ENCODE measurements at regions of chr2 and their contacts with region 1.

Region 1: DNA sequence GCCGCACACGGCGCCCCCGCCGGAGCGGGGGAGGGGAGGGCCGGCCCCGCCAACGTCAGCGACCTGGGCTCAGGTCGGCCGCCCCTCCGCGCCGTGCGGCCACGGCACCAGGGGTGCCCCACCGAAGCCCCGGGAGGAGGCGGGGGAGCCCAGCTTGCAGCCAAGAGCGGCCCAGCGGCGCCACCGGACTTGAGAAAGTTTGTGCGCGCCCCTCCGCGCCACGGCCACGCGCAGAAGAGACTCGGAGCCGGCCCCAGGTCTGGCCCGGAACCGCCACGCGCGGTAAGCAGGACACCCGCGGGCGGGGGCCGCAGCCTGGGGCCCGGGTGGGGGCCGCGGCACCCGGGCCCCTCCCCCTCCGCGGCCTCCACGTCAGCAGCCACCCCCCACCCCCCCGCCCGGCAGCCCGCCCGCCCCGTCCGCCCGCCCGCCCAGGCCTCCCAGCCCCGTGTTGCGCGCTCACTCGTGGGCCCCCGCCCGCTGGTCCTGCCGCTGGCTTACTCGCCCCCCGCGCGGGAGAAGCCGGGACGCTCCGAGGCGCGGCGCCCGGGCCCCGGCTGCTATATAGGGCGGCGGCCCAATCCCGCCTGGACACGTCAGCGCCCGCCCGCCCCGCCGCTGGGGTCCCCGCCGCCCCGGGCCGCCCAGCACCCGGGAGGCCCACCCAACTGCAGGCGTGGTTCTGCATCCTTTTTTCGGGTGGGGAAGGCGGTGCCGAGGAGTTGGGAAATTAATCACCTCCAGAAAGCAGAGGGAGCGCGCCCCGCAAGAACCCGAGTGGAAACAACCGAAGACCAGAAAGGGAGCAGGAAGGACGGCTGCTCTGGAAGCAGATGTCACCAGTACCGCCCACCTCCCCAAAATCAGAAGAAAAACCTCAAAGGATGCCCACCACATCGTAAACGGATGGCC is 42.9 kb downstream of the HDLBP start:
- DNase-seq: peak; percentile 51 to 93
- H3K4me3 ChIP-seq: peak overlapping the region; percentile 97
- CTCF ChIP-seq: no peak
- POLR2A ChIP-seq: no peak

Region 2: DNA sequence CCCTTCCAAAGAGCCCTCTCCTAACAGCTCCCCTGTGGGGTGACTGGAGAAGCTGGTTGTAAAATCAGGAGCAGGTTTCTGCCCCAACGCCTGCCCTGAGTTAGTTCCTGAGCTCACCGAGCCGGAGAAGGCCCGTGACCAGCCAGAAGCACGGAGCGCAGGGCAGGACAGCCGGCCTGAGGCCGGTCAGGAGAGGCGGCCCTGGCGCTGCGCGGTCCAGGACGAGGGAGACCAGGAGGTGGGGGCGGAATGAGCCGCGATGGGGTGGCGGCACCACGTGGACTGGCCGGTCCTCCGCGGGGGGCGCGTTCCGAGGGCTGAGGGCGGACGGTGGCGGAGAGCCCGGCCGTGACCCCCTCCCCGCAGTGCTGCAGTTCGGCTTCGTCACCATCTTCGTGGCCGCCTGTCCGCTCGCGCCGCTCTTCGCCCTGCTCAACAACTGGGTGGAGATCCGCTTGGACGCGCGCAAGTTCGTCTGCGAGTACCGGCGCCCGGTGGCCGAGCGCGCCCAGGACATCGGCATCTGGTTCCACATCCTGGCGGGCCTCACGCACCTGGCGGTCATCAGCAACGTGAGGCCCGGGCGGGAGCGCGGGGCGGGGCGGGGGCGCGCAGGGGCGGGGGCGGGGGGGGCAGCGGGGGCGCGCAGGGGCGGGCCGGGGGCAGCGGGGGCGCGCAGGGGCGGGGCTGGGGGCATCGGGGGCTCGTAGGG is 55.1 kb before region 1 on chr2:
- intact Hi-C with region 1: no loop called
- DNase-seq: peak; percentile 43 to 91
- H3K4me3 ChIP-seq: no peak overlapping the region
- CTCF ChIP-seq: no peak
- POLR2A ChIP-seq: no peak

Region 3: GRCh38 chr2:241315093-241315878 is 42.7 kb after region 1 on chr2 and contains the start of gene HDLBP:
- intact Hi-C with region 1: loop called (anchors 1 kb)
- DNase-seq: peak; percentile 98 to 100
- H3K4me3 ChIP-seq: peak within 1 kb of the TSS; percentile 87
- CTCF ChIP-seq: no peak
- POLR2A ChIP-seq: no peak
- total RNA-seq, gene HDLBP: 241 to 393 (median 294) TPM